ENCODE measurements at regions of chr16 and their contacts with region 1.

Region 1: DNA sequence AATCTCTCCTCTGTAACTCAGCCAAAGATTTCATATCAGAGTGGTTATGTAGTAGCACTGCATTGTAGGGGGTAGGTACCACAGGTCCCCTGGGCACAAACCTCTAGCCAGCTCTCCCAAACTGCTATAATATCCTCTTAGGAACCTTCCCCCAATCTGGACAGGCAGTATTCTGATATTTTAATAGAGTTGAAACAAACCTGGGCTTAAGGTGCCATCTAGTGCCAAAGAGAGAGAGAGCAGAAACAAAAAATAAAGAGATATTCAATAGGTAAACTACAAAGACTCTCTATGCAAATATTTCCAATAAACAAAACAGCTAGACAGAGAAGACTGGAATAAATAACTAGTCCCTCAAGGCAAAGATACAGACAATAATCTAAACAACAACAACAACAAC is 1070.0 kb downstream of the CDH11 start:
- DNase-seq: no peak
- ATAC-seq: peak in 1 of 4 donors; percentile 24
- H3K4me3 ChIP-seq: no peak overlapping the region
- H3K27ac ChIP-seq: no peak overlapping the region
- H3K4me1 ChIP-seq: no peaks in the 10 kb centered on the region
- H3K27me3 ChIP-seq: no peaks in the 10 kb centered on the region
- CTCF ChIP-seq: peak in 4 of 12 donors; percentile 15 to 46 (median 28)
- POLR2A ChIP-seq: no peak

Region 2: DNA sequence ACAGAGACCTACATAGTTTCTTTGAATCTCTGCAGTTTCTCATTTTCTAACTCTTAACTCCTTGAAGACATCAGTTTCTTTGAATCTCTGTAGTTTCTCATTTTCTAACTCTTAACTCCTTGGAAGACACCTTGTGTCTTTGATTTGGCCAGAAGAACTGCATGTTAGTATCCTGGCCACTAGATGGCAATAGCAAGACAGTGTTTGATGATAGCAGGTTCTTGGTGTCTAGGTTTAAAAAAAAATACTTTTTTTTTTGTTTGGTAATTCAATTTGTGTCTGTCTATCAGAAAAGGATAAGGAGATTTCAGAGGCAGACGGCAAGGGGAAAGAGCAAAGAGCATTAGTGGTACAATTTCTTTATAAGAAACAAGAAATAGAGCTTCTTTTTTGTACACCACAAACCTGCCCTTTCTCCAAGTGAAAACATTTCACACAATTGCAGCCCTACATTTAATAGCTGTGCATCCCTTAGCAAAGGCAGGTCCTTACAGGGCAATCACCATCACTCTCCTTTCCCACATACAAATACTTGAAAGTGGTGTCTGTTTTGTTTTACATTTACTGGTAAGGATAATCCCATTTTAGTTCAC is 690.7 kb before region 1 on chr16:
- intact Hi-C with region 1: loop called in 2 of 10 experiments (anchors 10 kb)
- DNase-seq: no peak
- ATAC-seq: peak in 1 of 4 donors; percentile 45
- H3K4me3 ChIP-seq: no peak overlapping the region
- H3K27ac ChIP-seq: no peak overlapping the region
- H3K4me1 ChIP-seq: no peaks in the 10 kb centered on the region
- H3K27me3 ChIP-seq: no peaks in the 10 kb centered on the region
- CTCF ChIP-seq: peak; percentile 61 to 81 (median 69)
- POLR2A ChIP-seq: no peak

Region 3: DNA sequence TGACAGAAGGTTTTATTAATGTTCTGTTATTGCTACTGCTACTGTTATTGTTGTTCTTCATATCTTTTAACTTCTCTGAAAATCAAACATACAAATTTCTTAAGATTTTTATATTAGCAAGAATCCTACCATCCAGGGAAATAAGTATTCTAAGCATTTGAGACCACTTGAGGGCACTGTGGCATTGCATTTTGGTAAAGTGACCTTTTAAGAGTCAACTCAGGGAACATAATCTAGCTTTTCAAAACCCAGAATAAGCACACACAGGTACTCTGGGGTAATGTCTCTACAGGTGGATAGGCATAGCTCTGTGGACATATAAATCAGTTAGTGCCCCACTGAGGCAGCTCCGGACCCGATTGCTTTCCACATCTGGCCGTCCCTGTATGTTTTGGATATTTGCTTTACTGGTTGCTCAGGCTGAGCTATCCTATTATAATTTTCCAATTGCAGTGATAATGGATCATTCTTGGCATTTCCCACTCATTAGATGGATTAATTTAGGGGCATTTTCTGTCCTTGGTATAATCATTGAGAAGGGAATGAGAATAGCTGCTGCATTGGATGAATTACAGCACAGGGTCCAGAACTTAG is 590.5 kb before region 1 on chr16:
- intact Hi-C with region 1: loop called in 2 of 10 experiments (anchors 5 to 10 kb)
- DNase-seq: no peak
- ATAC-seq: peak in 3 of 4 donors; percentile 5 to 47 (median 45)
- H3K4me3 ChIP-seq: no peak overlapping the region
- H3K27ac ChIP-seq: no peak overlapping the region
- H3K4me1 ChIP-seq: no peaks in the 10 kb centered on the region
- H3K27me3 ChIP-seq: no peaks in the 10 kb centered on the region
- CTCF ChIP-seq: peak in 10 of 12 donors; percentile 13 to 59 (median 48)
- POLR2A ChIP-seq: no peak

Measured in heart left ventricle (tissue), 16 donors.